Mammary epithelial cell (primary cell): ENCODE measurements at regions of chrX and their contacts with region 1.

Region 1: DNA sequence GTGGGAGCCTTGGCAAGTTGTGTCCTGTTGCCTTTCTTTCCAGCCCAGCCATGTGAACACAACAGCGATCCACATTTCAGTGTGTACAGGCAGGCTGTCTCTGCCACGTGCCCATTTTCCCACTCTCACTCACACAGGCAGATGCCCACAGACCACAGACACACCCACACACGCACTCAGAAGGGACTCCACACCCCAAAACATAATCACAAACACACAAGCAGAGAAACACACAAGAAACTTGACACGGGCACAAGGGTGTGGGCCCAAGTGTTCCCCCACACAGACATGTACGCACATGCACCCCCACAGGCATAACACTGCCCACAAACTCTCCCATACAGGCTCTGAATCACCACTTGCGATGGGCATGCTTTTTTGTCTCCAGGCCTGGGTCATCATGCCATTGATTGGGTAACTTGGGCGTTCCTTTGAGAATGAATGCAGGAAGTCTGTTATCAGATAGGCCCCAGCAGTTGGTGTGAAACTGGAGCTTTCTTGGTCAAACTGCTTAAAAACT is 84.3 kb downstream of the NBDY start:
- DNase-seq: peak; percentile 96
- H3K4me3 ChIP-seq: no peak overlapping the region
- H3K27ac ChIP-seq: peak overlapping the region; percentile 77
- H3K4me1 ChIP-seq: peaks cover 10% of the 10 kb centered on the region
- H3K27me3 ChIP-seq: no peaks in the 10 kb centered on the region
- CTCF ChIP-seq: no peak

Region 2: GRCh38 chrX:56744996-56745395 is 68.4 kb before region 1 on chrX:
- CTCF ChIA-PET with region 1: no interaction called
- dilution Hi-C with region 1: no loop called
- in situ Hi-C with region 1: no loop called
- intact Hi-C with region 1: loop called (anchors 1 kb)
- DNase-seq: peak; percentile 76
- H3K4me3 ChIP-seq: no peak overlapping the region
- H3K27ac ChIP-seq: no peak overlapping the region
- H3K4me1 ChIP-seq: peaks cover 18% of the 10 kb centered on the region
- H3K27me3 ChIP-seq: no peaks in the 10 kb centered on the region
- CTCF ChIP-seq: no peak

Region 3: GRCh38 chrX:56764153-56764974 is 49.0 kb before region 1 on chrX:
- CTCF ChIA-PET with region 1: no interaction called
- dilution Hi-C with region 1: no loop called
- in situ Hi-C with region 1: no loop called
- intact Hi-C with region 1: no loop called
- DNase-seq: peak; percentile 79
- H3K4me3 ChIP-seq: peak overlapping the region; percentile 52 to 72 (median 64)
- H3K27ac ChIP-seq: peak overlapping the region; percentile 10
- H3K4me1 ChIP-seq: peaks cover 15% of the 10 kb centered on the region
- H3K27me3 ChIP-seq: no peaks in the 10 kb centered on the region
- CTCF ChIP-seq: peak; percentile 68 to 74

Region 4: GRCh38 chrX:56947695-56948094 is 134.3 kb after region 1 on chrX:
- CTCF ChIA-PET with region 1: no interaction called
- dilution Hi-C with region 1: no loop called
- in situ Hi-C with region 1: loop called in 1 of 2 experiments (anchors 25 kb)
- intact Hi-C with region 1: loop called (anchors 10 kb)
- DNase-seq: peak; percentile 48
- H3K4me3 ChIP-seq: no peak overlapping the region
- H3K27ac ChIP-seq: no peak overlapping the region
- H3K4me1 ChIP-seq: peaks cover 7% of the 10 kb centered on the region
- H3K27me3 ChIP-seq: no peaks in the 10 kb centered on the region
- CTCF ChIP-seq: no peak